ENCODE measurements at regions of chr9 and their contacts with region 1.

Region 1: GRCh38 chr9:134099123-134099787 is 31.4 kb upstream of the BRD3 start:
- DNase-seq: peak; percentile 45
- H3K4me3 ChIP-seq: no peak overlapping the region
- H3K27ac ChIP-seq: no peak overlapping the region
- H3K4me1 ChIP-seq: no peaks in the 10 kb centered on the region
- H3K27me3 ChIP-seq: no peaks in the 10 kb centered on the region
- CTCF ChIP-seq: peak; percentile 80 to 95

Region 2: GRCh38 chr9:133532937-133533668 is 566.2 kb before region 1 on chr9:
- CTCF ChIA-PET with region 1: interaction called, 3 read pairs
- dilution Hi-C with region 1: no loop called
- in situ Hi-C with region 1: no loop called
- intact Hi-C with region 1: loop called (anchors 5 kb)
- DNase-seq: peak; percentile 20
- H3K4me3 ChIP-seq: no peak overlapping the region
- H3K27ac ChIP-seq: no peak overlapping the region
- H3K4me1 ChIP-seq: peaks cover 4% of the 10 kb centered on the region
- H3K27me3 ChIP-seq: peaks cover 12% of the 10 kb centered on the region
- CTCF ChIP-seq: peak; percentile 50 to 56

Region 3: GRCh38 chr9:133742849-133743444 is 356.3 kb before region 1 on chr9:
- CTCF ChIA-PET with region 1: no interaction called
- dilution Hi-C with region 1: no loop called
- in situ Hi-C with region 1: no loop called
- intact Hi-C with region 1: loop called (anchors 10 kb)
- DNase-seq: peak; percentile 54
- H3K4me3 ChIP-seq: no peak overlapping the region
- H3K27ac ChIP-seq: no peak overlapping the region
- H3K4me1 ChIP-seq: peaks cover 6% of the 10 kb centered on the region
- H3K27me3 ChIP-seq: no peaks in the 10 kb centered on the region
- CTCF ChIP-seq: peak; percentile 97

Region 4: DNA sequence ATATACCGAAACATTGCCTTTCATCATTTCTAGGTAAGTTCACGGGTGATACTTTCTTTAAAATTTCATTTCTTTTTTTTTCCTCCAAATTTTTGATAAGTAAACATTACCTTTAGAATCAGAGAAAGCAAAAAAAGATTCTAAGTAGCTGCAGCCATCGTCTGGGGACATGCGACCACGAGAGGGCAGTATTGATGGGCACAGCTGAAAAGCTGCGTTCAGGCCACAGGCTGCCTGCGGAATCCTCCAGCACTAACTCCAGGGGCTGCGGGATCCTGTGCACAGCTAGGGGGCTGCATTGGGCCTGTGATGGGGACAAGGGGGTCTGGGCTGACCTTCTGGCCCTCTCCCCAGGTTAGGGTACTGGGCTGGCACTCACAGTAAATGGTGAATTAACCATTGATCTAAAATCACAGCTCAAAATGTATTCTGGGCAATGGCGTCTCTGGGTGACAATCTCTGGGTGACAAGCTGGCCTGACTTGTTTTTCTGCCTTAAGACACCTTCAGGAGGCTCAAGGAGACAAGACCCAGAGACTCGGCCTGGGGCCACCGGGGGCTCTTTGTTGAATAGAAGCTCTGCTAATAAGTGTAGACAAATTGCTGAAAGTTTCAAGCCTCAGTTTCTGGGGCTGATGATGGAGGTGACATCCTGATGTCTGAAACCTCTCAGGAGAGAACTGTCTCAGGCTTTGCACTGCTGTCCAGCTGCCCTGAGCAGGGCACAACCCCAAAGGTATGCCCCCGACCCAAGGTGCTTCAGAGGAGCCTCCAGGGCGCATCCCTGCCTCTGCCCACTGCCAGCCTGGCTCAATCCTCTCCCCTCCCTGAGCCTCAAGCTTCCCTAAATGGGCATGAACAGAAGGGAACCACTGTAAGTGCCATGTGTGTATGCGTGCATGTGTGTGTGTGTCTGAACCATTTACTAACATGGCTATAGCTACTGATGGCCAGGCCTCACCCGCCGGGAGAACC is 316.8 kb before region 1 on chr9:
- CTCF ChIA-PET with region 1: no interaction called
- dilution Hi-C with region 1: no loop called
- in situ Hi-C with region 1: loop called in 1 of 2 experiments (anchors 10 kb)
- intact Hi-C with region 1: loop called (anchors 2 kb)
- DNase-seq: peak; percentile 22
- H3K4me3 ChIP-seq: no peak overlapping the region
- H3K27ac ChIP-seq: no peak overlapping the region
- H3K4me1 ChIP-seq: no peaks in the 10 kb centered on the region
- H3K27me3 ChIP-seq: no peaks in the 10 kb centered on the region
- CTCF ChIP-seq: peak; percentile 80 to 83

Region 5: DNA sequence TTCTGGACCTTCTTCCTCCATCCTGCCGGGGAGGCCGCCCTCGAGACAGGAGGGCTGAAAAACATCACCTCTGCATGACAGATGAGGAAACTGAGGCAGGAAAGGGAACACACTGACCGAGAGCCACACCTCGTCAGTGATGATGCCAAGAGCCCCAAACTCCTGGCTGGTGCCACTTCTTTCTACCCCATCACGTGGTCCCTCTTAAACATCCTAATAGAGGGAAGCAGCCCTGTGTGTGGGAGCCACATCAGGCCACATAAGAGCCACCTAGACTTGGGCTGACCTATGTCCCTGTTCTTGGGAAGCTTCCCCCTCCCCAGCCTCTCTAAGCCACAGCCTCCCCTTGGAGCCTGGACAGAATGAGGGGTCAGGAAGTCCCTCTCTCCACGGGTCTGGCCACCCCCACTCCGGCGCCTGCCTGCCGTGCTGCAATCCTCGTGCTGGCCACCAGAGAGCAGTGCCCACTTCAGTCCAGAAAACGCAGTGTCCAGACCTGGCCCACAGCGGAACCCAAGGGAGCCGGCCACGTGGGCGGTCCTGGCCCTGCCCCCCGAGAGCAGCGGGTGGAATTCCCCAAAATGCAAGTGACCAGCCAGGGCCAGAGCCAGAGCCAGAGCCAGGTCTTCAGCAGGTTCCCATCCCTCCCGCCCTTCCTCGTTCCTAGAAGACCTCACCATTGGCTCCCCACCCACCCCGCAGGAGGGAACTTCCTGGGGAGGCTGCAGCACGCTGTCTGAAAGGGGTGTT is 306.4 kb before region 1 on chr9:
- CTCF ChIA-PET with region 1: no interaction called
- dilution Hi-C with region 1: no loop called
- in situ Hi-C with region 1: loop called in 1 of 2 experiments (anchors 10 kb)
- intact Hi-C with region 1: loop called (anchors 1 kb)
- DNase-seq: peak; percentile 58
- H3K4me3 ChIP-seq: no peak overlapping the region
- H3K27ac ChIP-seq: no peak overlapping the region
- H3K4me1 ChIP-seq: peaks cover 9% of the 10 kb centered on the region
- H3K27me3 ChIP-seq: no peaks in the 10 kb centered on the region
- CTCF ChIP-seq: peak; percentile 77 to 90

Measured in mammary epithelial cell (primary cell).